PC-3 (cell line): ENCODE measurements at regions of chr12 and their contacts with region 1.

Region 1: DNA sequence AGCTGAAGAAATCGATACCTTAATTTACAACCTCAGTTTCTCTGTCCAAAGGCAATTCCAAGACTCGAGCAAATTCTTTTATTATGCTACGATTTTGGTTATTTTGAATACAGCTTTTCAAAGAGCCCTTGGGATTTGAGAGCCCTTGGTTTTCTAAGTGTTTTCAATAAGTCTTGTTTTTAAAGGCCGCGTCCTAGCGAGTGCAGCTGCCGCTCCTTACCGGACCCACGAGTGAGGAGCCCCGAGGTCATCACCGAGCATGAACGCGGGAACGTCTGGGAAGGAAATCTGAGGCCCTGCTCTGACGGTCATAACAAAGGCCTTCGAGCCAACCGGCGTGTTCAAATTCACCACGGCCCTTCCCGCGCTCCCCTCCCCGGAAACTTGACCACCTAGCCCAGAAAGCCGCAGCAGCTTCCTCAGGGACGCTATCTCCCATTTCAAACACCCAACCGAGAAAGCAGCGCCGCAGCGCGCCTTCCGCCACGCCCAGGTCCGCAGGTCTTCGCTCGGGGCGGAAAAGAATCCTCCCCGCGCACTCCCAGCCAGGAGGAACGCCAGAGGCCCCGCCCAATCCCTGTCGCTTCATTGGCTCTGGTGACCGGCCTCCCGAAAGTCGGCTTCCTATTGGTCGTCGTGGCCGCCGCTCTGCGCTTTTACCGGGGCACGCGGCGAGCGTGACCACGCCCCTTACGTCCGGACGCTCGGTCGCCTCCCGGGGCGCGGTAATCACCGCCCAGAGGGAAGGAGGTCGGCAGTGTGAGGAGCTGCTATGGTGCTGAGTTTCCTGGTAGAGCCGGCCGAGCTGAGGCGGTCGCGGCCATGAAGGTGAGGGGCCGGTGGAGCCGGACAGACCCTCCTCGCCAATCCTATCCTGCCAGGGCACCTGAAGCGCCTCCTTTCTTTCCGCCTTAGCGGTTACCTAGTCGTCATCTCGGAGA is at the start of gene RNF34:
- DNase-seq: peak; percentile 99
- ATAC-seq: peak; percentile 93
- H3K4me3 ChIP-seq: peak within 1 kb of the TSS; percentile 97
- H3K27ac ChIP-seq: peak within 1 kb of the TSS; percentile 52
- H3K4me1 ChIP-seq: peaks cover 22% of the 10 kb centered on the region
- H3K27me3 ChIP-seq: no peaks in the 10 kb centered on the region
- CTCF ChIP-seq: no peak
- total RNA-seq, gene RNF34: 73.7 and 88.2 TPM in 2 replicates

Region 2: GRCh38 chr12:121060149-121061001 is 339.3 kb before region 1 on chr12:
- CTCF ChIA-PET with region 1: no interaction called
- POLR2A ChIA-PET with region 1: no interaction called
- intact Hi-C with region 1: no loop called
- DNase-seq: peak; percentile 75
- ATAC-seq: peak; percentile 71
- H3K4me3 ChIP-seq: peak overlapping the region; percentile 35; the same call in 1 of the 2 replicates
- H3K27ac ChIP-seq: no peak overlapping the region
- H3K4me1 ChIP-seq: no peaks in the 10 kb centered on the region
- H3K27me3 ChIP-seq: no peaks in the 10 kb centered on the region
- CTCF ChIP-seq: peak; percentile 64

Region 3: DNA sequence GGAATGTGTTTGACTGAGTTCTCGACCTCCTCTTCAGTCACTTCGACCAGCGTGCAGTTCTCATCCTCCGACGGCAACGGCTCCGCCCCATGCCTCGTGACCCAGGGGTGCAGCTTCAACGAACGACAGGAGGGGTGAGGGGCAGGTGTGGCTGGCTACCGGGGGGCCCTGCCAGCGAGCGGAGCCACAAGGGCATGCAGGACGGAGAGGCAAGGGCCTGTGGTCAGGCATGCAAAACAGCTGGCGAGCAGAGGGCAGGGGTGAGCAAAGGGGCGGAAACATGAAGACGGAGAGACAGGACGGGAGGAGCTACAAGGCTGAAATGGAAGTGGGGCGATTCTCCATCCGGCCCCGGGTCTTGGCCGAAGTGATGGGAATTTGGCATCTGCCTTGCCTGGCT is 151.0 kb before region 1 on chr12:
- CTCF ChIA-PET with region 1: no interaction called
- POLR2A ChIA-PET with region 1: no interaction called
- intact Hi-C with region 1: no loop called
- DNase-seq: no peak
- ATAC-seq: no peak
- H3K4me3 ChIP-seq: no peak overlapping the region
- H3K27ac ChIP-seq: no peak overlapping the region
- H3K4me1 ChIP-seq: no peaks in the 10 kb centered on the region
- H3K27me3 ChIP-seq: no peaks in the 10 kb centered on the region
- CTCF ChIP-seq: no peak

Region 4: GRCh38 chr12:121351820-121352681 is 47.6 kb before region 1 on chr12 and contains the start of gene ANAPC5:
- CTCF ChIA-PET with region 1: no interaction called
- POLR2A ChIA-PET with region 1: no interaction called
- intact Hi-C with region 1: loop called (anchors 1 kb)
- DNase-seq: peak; percentile 99
- ATAC-seq: peak; percentile 96
- H3K4me3 ChIP-seq: peak within 1 kb of the TSS; percentile 95
- H3K27ac ChIP-seq: peak within 1 kb of the TSS; percentile 48
- H3K4me1 ChIP-seq: peaks cover 11% of the 10 kb centered on the region
- H3K27me3 ChIP-seq: no peaks in the 10 kb centered on the region
- CTCF ChIP-seq: no peak
- total RNA-seq, gene ANAPC5: 171 and 199 TPM in 2 replicates

Region 5: GRCh38 chr12:121413917-121414316 is 14.3 kb after region 1 on chr12:
- CTCF ChIA-PET with region 1: no interaction called
- POLR2A ChIA-PET with region 1: interaction called, 15 read pairs
- intact Hi-C with region 1: no loop called
- DNase-seq: no peak
- ATAC-seq: peak; percentile 86
- H3K4me3 ChIP-seq: no peak overlapping the region
- H3K27ac ChIP-seq: no peak overlapping the region
- H3K4me1 ChIP-seq: 0 out of 2 replicates have a peak, but pooled peaks cover 3% of the 10 kb centered on the region
- H3K27me3 ChIP-seq: no peaks in the 10 kb centered on the region
- CTCF ChIP-seq: no peak